ENCODE measurements at regions of chrX and their contacts with region 1.

Region 1: DNA sequence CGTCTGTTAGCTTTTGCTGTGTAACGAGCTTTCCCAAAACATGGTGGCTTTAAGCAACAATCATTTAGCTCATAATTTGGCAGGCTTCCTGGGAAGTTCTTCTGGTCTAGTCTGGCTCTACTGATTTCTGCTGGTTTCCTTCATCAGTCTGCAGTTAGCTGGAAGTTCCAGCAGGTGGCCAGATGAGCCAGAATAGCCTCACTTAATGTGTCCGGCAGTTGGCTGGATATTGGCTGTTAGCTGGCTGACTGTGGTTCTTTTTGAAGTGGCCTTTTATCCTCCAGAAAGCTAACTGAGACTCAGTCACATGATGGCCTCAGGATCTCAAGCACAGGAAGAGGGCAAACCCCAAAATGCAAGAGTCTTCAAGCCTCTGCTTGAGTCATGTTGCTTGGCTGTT is 34.9 kb downstream of the FTHL17 start:
- DNase-seq: no peak
- H3K4me3 ChIP-seq: no peak overlapping the region
- H3K4me3 Mint-ChIP-seq: no peak overlapping the region
- H3K27ac ChIP-seq: no peak overlapping the region
- H3K27ac Mint-ChIP-seq: no peak overlapping the region
- H3K4me1 ChIP-seq: no peaks in the 10 kb centered on the region
- H3K4me1 Mint-ChIP-seq: peaks cover 0 to 6% (median 3%) of the 10 kb centered on the region in 4 donors
- H3K27me3 ChIP-seq: no peaks in the 10 kb centered on the region
- H3K27me3 Mint-ChIP-seq: peaks cover 1 to 3% of the 10 kb centered on the region in 2 donors

Region 2: GRCh38 chrX:31658360-31658759 is 621.5 kb after region 1 on chrX:
- CTCF ChIA-PET with region 1: interaction called, 3 read pairs
- POLR2A ChIA-PET with region 1: no interaction called
- intact Hi-C with region 1: loop called (anchors 5 kb)
- DNase-seq: peak in 3 of 5 donors; percentile 0 to 1 (median 1)
- H3K4me3 ChIP-seq: no peak overlapping the region
- H3K4me3 Mint-ChIP-seq: no peak overlapping the region
- H3K27ac ChIP-seq: no peak overlapping the region
- H3K27ac Mint-ChIP-seq: no peak overlapping the region
- H3K4me1 ChIP-seq: no peaks in the 10 kb centered on the region
- H3K4me1 Mint-ChIP-seq: no peaks in the 10 kb centered on the region
- H3K27me3 ChIP-seq: no peaks in the 10 kb centered on the region
- H3K27me3 Mint-ChIP-seq: no peaks in the 10 kb centered on the region